CD8-positive, alpha-beta memory T cell (primary cell): ENCODE measurements at regions of chr7 and their contacts with region 1.

Region 1: DNA sequence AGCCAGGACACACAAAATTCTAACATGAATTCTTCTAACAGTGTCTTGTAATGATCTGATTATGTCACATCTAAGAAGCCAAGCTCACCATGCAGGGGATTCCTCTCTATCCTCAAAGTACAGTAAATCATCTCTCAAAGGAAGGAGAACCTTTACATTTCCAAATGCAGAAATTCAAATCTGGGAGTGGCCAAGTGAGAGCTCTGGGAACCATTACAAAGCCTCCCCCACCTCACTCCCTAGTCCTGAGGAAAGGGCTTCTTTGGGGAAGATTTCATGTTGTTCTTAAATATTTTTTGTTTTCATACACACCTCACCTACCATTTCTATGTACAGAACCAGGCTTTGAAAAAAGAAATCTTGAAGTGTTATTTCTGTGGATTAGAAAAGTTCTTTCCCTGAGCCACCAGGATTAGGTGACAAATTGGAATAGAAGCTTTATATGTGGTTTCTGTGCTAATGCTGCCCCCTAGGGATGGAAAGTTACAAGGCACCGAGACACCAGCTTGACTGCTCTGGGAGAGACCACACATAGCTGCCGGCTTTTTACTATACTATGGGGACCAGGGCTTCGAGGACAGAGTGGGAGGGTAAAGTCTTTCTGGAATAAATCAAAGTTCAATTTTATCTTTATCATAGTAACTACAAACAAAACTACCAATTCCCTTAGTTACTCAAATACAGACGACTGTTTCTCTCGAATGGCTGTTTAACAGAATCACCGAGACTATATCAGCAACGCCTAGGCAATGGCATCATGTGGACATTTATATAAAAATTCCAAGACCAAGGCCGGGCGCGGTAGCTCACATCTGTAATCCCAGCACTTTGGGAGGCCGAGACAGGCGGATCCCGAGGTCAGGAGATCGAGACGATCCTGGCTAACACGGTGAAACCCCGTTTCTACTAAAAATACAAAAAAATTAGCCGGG is 116.1 kb downstream of the RNF216 start:
- DNase-seq: peak; percentile 35 to 73 (median 55)
- H3K4me3 ChIP-seq: no peak overlapping the region
- H3K4me3 Mint-ChIP-seq: no peak overlapping the region
- H3K27ac ChIP-seq: no peak overlapping the region
- H3K27ac Mint-ChIP-seq: peak overlapping the region in 1 of 8 donors; percentile 78
- H3K4me1 ChIP-seq: peaks cover 15% of the 10 kb centered on the region
- H3K4me1 Mint-ChIP-seq: peaks cover 16 to 26% (median 23%) of the 10 kb centered on the region in 3 donors
- H3K27me3 ChIP-seq: no peaks in the 10 kb centered on the region
- H3K27me3 Mint-ChIP-seq: peaks cover 0 to 2% of the 10 kb centered on the region in 2 donors

Region 2: GRCh38 chr7:5494683-5495561 is 170.4 kb before region 1 on chr7:
- CTCF ChIA-PET with region 1: interaction called, 60 read pairs
- POLR2A ChIA-PET with region 1: no interaction called
- DNase-seq: peak; percentile 67 to 83 (median 73)
- H3K4me3 ChIP-seq: peak overlapping the region; percentile 25
- H3K4me3 Mint-ChIP-seq: peak overlapping the region in 6 of 7 donors; percentile 3 to 73 (median 58)
- H3K27ac ChIP-seq: no peak overlapping the region
- H3K27ac Mint-ChIP-seq: peak overlapping the region in 5 of 8 donors; percentile 23 to 51 (median 24)
- H3K4me1 ChIP-seq: peaks cover 19% of the 10 kb centered on the region
- H3K4me1 Mint-ChIP-seq: peaks cover 8 to 24% (median 23%) of the 10 kb centered on the region in 3 donors
- H3K27me3 ChIP-seq: no peaks in the 10 kb centered on the region
- H3K27me3 Mint-ChIP-seq: no peaks in the 10 kb centered on the region

Region 3: GRCh38 chr7:5557920-5558401 is 107.4 kb before region 1 on chr7:
- CTCF ChIA-PET with region 1: interaction called, 21 read pairs
- POLR2A ChIA-PET with region 1: no interaction called
- DNase-seq: peak in 1 of 5 donors; percentile 37
- H3K4me3 ChIP-seq: peak overlapping the region; percentile 48
- H3K4me3 Mint-ChIP-seq: peak overlapping the region; percentile 82 to 90 (median 85)
- H3K27ac ChIP-seq: peak overlapping the region; percentile 63
- H3K27ac Mint-ChIP-seq: peak overlapping the region; percentile 90 to 98 (median 94)
- H3K4me1 ChIP-seq: peaks cover 51% of the 10 kb centered on the region
- H3K4me1 Mint-ChIP-seq: peaks cover 40 to 49% (median 43%) of the 10 kb centered on the region in 3 donors
- H3K27me3 ChIP-seq: peaks cover under 1% of the 10 kb centered on the region
- H3K27me3 Mint-ChIP-seq: peaks cover 5 to 12% of the 10 kb centered on the region in 2 donors

Region 4: DNA sequence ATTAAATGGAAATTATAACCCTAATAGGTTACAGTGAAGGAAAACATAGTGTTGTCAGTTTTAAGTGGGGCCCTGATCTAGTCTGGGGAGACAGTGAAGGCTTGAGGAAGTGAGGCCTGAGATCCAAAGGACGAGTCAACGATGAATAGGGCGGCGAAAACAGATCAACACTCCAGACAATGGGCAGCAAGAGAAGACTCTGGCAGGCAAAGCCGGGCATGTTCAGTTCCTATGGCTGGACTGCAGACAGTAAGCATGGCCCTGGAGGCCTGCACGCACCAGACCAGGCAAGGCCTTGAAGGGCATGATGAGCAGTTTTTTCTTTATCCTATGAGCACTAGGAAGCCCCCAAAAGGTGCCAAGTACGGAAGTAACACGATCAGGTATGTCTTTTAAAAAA is 11.7 kb before region 1 on chr7:
- CTCF ChIA-PET with region 1: interaction called, 16 read pairs
- POLR2A ChIA-PET with region 1: no interaction called
- DNase-seq: no peak
- H3K4me3 ChIP-seq: no peak overlapping the region
- H3K4me3 Mint-ChIP-seq: no peak overlapping the region
- H3K27ac ChIP-seq: no peak overlapping the region
- H3K27ac Mint-ChIP-seq: peak overlapping the region in 3 of 8 donors; percentile 17 to 68 (median 32)
- H3K4me1 ChIP-seq: no peaks in the 10 kb centered on the region
- H3K4me1 Mint-ChIP-seq: peaks cover 7 to 15% (median 10%) of the 10 kb centered on the region in 3 donors
- H3K27me3 ChIP-seq: no peaks in the 10 kb centered on the region
- H3K27me3 Mint-ChIP-seq: no peaks in the 10 kb centered on the region

Region 5: DNA sequence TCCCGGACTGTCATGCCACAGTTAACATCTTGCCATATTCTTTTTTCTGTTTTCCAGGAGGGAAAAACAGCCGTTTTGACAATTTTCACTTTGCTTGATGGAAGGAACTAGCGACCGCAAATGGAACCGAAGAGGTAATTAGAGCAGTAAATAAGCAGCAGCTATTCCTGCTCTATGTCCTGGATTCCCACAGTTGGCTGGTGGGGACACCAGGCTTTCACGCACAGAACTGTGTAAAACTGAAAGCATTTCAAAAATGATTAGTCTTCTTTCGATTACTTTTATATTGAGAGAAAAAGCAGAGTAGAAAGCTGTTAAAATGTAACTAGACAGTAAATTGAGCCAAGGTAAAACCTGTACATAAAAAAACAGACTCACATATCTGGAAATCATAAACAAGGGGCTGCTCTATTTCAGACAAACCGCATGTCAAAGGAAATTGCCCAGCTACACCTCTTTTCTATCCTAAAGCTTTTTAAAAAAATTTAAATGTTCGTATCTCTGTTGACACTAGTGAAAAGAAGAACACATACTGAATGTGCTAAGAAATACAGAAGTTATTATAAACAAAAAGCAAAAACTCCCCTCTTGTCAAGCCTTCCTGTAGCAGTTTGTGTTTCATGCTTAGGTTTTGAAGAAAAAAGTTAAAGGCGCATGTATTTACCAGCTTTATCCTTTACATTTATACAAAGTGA is 22.7 kb after region 1 on chr7:
- CTCF ChIA-PET with region 1: interaction called, 14 read pairs
- POLR2A ChIA-PET with region 1: interaction called, 11 read pairs
- DNase-seq: peak in 1 of 5 donors; percentile 46
- H3K4me3 ChIP-seq: no peak overlapping the region
- H3K4me3 Mint-ChIP-seq: peak overlapping the region; percentile 10 to 72 (median 64)
- H3K27ac ChIP-seq: no peak overlapping the region
- H3K27ac Mint-ChIP-seq: peak overlapping the region in 7 of 8 donors; percentile 25 to 94 (median 66)
- H3K4me1 ChIP-seq: peaks cover 71% of the 10 kb centered on the region
- H3K4me1 Mint-ChIP-seq: peaks cover 54 to 83% (median 72%) of the 10 kb centered on the region in 3 donors
- H3K27me3 ChIP-seq: no peaks in the 10 kb centered on the region
- H3K27me3 Mint-ChIP-seq: no peaks in the 10 kb centered on the region

Region 6: GRCh38 chr7:5694912-5695726 is 29.8 kb after region 1 on chr7:
- CTCF ChIA-PET with region 1: interaction called, 14 read pairs
- POLR2A ChIA-PET with region 1: interaction called, 3 read pairs
- DNase-seq: peak; percentile 21 to 83 (median 69)
- H3K4me3 ChIP-seq: peak overlapping the region; percentile 35
- H3K4me3 Mint-ChIP-seq: peak overlapping the region; percentile 68 to 93 (median 86)
- H3K27ac ChIP-seq: no peak overlapping the region
- H3K27ac Mint-ChIP-seq: peak overlapping the region; percentile 65 to 95 (median 89)
- H3K4me1 ChIP-seq: peaks cover 92% of the 10 kb centered on the region
- H3K4me1 Mint-ChIP-seq: peaks cover 79 to 99% (median 98%) of the 10 kb centered on the region in 3 donors
- H3K27me3 ChIP-seq: no peaks in the 10 kb centered on the region
- H3K27me3 Mint-ChIP-seq: no peaks in the 10 kb centered on the region

Region 7: GRCh38 chr7:5704534-5704922 is 39.2 kb after region 1 on chr7:
- CTCF ChIA-PET with region 1: interaction called, 19 read pairs
- POLR2A ChIA-PET with region 1: no interaction called
- DNase-seq: peak; percentile 44 to 80 (median 61)
- H3K4me3 ChIP-seq: no peak overlapping the region
- H3K4me3 Mint-ChIP-seq: no peak overlapping the region
- H3K27ac ChIP-seq: no peak overlapping the region
- H3K27ac Mint-ChIP-seq: peak overlapping the region in 3 of 8 donors; percentile 24 to 62 (median 37)
- H3K4me1 ChIP-seq: peaks cover 34% of the 10 kb centered on the region
- H3K4me1 Mint-ChIP-seq: peaks cover 31 to 36% (median 34%) of the 10 kb centered on the region in 3 donors
- H3K27me3 ChIP-seq: no peaks in the 10 kb centered on the region
- H3K27me3 Mint-ChIP-seq: no peaks in the 10 kb centered on the region

Region 8: GRCh38 chr7:5773661-5774086 is 108.3 kb after region 1 on chr7:
- CTCF ChIA-PET with region 1: no interaction called
- POLR2A ChIA-PET with region 1: no interaction called
- DNase-seq: peak in 1 of 5 donors; percentile 16
- H3K4me3 ChIP-seq: no peak overlapping the region
- H3K4me3 Mint-ChIP-seq: no peak overlapping the region
- H3K27ac ChIP-seq: no peak overlapping the region
- H3K27ac Mint-ChIP-seq: peak overlapping the region in 2 of 8 donors; percentile 22 to 62
- H3K4me1 ChIP-seq: peaks cover 53% of the 10 kb centered on the region
- H3K4me1 Mint-ChIP-seq: peaks cover 49 to 74% (median 72%) of the 10 kb centered on the region in 3 donors
- H3K27me3 ChIP-seq: no peaks in the 10 kb centered on the region
- H3K27me3 Mint-ChIP-seq: no peaks in the 10 kb centered on the region